ENCODE measurements at regions of chr9 and their contacts with region 1.

Region 1: GRCh38 chr9:129726322-129727160 is 26.3 kb downstream of the PTGES start:
- DNase-seq: peak; percentile 51
- H3K4me3 ChIP-seq: no peak overlapping the region
- H3K27ac ChIP-seq: no peak overlapping the region
- H3K4me1 ChIP-seq: no peaks in the 10 kb centered on the region
- H3K27me3 ChIP-seq: no peaks in the 10 kb centered on the region
- CTCF ChIP-seq: peak; percentile 90 to 97
- POLR2A ChIP-seq: no peak

Region 2: GRCh38 chr9:129641746-129642513 is 84.6 kb before region 1 on chr9 and contains the start of gene ASB6:
- CTCF ChIA-PET with region 1: interaction called, 19 read pairs
- POLR2A ChIA-PET with region 1: no interaction called
- dilution Hi-C with region 1: no loop called
- intact Hi-C with region 1: loop called (anchors 1 kb)
- DNase-seq: peak; percentile 98
- H3K4me3 ChIP-seq: peak within 1 kb of the TSS; percentile 77 to 97 (median 83)
- H3K27ac ChIP-seq: peak within 1 kb of the TSS; percentile 48
- H3K4me1 ChIP-seq: peaks cover 10% of the 10 kb centered on the region
- H3K27me3 ChIP-seq: no peaks in the 10 kb centered on the region
- CTCF ChIP-seq: peak; percentile 92 to 99
- POLR2A ChIP-seq: peak; percentile 68
- total RNA-seq, gene ASB6: 22.9 and 23.8 TPM in 2 replicates

Region 3: DNA sequence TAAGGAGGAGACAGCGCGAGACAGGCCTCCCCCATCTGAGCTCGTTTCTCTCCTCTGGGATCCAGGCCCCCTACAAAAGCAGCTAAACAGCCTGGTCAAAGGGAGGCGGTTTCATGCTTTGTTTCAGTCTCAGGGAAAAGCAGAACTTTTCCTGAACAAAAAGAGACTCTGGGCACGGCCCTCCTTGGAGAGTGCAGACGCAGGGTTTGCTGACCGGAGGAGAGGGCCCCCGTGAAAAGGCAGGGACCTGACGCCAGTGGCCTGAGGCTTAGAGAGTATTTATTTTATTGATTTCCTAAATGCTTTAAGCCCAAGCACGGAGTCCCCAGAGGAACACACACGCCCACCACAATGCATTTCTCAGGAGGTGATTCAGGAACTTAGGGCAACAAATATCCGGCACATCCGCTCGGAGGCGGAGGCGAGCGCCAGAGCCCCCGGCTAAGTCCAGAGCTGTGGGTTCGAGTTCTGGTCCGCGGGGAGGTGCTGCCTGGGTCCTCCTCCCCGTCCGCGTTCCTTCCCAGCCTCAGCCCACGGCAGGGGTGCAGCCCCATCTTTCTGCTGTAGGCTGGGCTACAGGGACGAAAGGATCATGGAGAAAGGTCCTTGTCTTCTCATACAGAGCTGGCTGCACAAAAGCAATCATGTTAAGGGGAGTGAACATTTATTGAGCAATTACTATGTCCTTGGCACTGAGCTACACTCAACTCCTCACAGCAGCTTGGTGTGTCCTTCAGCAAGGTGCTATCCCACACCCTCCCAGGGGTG is 13.7 kb before region 1 on chr9:
- CTCF ChIA-PET with region 1: interaction called, 10 read pairs
- POLR2A ChIA-PET with region 1: no interaction called
- dilution Hi-C with region 1: no loop called
- intact Hi-C with region 1: no loop called
- DNase-seq: no peak
- H3K4me3 ChIP-seq: no peak overlapping the region
- H3K27ac ChIP-seq: no peak overlapping the region
- H3K4me1 ChIP-seq: no peaks in the 10 kb centered on the region
- H3K27me3 ChIP-seq: peaks cover 0 to under 1% of the 10 kb centered on the region in 2 experiments
- CTCF ChIP-seq: no peak
- POLR2A ChIP-seq: no peak

Region 4: DNA sequence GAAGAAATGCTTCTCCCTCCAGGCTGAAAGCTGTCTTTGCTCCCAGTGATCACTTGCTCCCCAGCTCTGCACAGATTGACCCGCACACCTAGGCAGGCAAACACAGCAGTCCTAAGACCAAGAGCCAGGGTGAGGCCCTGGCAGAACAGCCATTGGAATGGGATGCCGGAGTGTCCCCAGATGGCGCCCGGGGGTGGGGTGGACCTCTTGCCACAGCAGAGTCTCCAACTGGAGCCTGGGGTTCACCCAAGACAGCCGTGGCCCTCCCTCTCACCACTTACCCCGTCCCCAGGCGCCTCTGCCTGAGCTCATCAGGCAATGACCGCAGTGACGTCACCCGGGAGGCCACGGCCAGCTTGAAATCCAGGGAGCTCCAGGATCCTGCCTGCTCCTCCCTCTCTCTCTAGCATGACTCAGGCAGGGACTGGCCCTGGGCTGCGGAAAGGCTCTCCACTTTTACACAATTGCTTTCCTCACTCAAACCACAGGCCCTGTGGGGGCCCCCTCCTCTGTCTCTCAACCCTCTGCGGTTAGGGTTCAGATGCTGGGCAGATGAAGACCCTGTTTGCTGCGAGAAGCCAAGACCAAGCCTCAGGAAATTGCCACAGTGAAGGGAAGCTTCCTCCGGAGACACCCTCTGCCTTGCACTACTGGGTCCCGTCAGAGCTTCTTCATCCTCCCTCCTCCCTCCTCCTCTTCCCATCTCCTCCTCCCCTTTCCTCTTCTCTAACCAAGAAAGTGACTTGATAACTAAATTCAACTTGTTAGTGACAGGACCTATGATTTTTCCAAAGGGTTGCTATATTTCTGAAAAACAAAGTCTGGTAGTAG is 50.6 kb after region 1 on chr9:
- CTCF ChIA-PET with region 1: interaction called, 67 read pairs
- POLR2A ChIA-PET with region 1: no interaction called
- dilution Hi-C with region 1: loop called (anchors 5 kb)
- intact Hi-C with region 1: no loop called
- DNase-seq: peak; percentile 78
- H3K4me3 ChIP-seq: no peak overlapping the region
- H3K27ac ChIP-seq: no peak overlapping the region
- H3K4me1 ChIP-seq: peaks cover 4% of the 10 kb centered on the region
- H3K27me3 ChIP-seq: peaks cover 0 to 2% of the 10 kb centered on the region in 2 experiments
- CTCF ChIP-seq: no peak
- POLR2A ChIP-seq: no peak

Region 5: GRCh38 chr9:129783516-129784361 is 57.2 kb after region 1 on chr9:
- CTCF ChIA-PET with region 1: interaction called, 67 read pairs
- POLR2A ChIA-PET with region 1: no interaction called
- dilution Hi-C with region 1: loop called (anchors 5 kb)
- intact Hi-C with region 1: loop called (anchors 1 kb)
- DNase-seq: peak; percentile 62
- H3K4me3 ChIP-seq: no peak overlapping the region
- H3K27ac ChIP-seq: no peak overlapping the region
- H3K4me1 ChIP-seq: no peaks in the 10 kb centered on the region
- H3K27me3 ChIP-seq: peaks cover 0 to 2% of the 10 kb centered on the region in 2 experiments
- CTCF ChIP-seq: peak; percentile 81 to 84
- POLR2A ChIP-seq: no peak

Region 6: GRCh38 chr9:129796029-129796910 is 69.7 kb after region 1 on chr9:
- CTCF ChIA-PET with region 1: interaction called, 32 read pairs
- POLR2A ChIA-PET with region 1: no interaction called
- dilution Hi-C with region 1: no loop called
- intact Hi-C with region 1: loop called (anchors 2 kb)
- DNase-seq: no peak
- H3K4me3 ChIP-seq: no peak overlapping the region
- H3K27ac ChIP-seq: no peak overlapping the region
- H3K4me1 ChIP-seq: no peaks in the 10 kb centered on the region
- H3K27me3 ChIP-seq: peaks cover 0 to 5% of the 10 kb centered on the region in 2 experiments
- CTCF ChIP-seq: no peak
- POLR2A ChIP-seq: no peak

Measured in endothelial cell of umbilical vein (primary cell).